ENCODE measurements at regions of chr9 and their contacts with region 1.

Region 1: DNA sequence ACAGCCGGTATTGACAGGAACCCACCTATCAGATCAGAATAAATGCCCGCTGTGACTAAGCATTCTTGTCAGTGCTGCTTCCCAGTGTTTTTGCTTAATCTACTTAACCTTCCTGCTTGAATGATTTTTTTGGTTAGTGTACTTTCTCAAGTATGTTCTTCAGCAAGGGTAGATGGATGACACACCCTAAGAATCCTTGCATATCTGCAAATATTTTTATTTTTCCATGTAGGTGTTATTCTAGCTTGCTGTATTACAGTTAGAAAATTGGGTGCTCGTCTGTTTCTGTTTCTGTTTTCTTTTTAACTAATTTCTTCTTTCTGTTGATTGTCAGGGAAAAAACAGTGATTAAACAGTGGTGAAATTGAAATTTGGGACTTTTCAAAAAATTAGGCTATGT is 64.5 kb downstream of the SEC61B start:
- DNase-seq: no peak
- ATAC-seq: no peak
- H3K4me3 ChIP-seq: no peak overlapping the region
- H3K27ac ChIP-seq: no peak overlapping the region
- H3K4me1 ChIP-seq: no peaks in the 10 kb centered on the region
- H3K27me3 ChIP-seq: no peaks in the 10 kb centered on the region
- CTCF ChIP-seq: no peak
- EP300 ChIP-seq: no peak
- POLR2A ChIP-seq: no peak
- RAD21 ChIP-seq: no peak

Region 2: DNA sequence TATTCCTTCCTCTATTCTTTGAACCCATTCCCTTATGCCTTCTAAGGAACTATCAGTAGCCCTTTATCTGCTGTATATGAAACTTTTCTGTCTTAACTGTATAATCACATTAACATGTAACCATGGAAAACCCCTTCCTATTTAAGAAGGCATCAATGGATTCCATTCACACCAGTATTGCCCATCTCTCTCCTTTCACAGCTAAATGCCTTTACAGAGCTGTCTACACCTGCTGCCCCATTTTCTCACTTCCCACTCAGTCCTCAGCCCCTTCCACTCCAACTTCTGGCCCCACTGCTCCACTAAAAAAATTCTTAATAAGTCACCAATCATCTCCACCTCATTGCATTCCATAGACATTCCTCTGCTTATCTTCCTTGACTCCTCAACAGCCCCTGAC is 13.7 kb before region 1 on chr9:
- CTCF ChIA-PET with region 1: interaction called, 4 read pairs
- POLR2A ChIA-PET with region 1: no interaction called
- RAD21 ChIA-PET with region 1: interaction called, 5 read pairs
- SMC1A ChIA-PET with region 1: interaction called, 10 read pairs
- in situ Hi-C with region 1: no loop called
- intact Hi-C with region 1: no loop called
- DNase-seq: no peak
- ATAC-seq: peak; percentile 69
- H3K4me3 ChIP-seq: no peak overlapping the region
- H3K27ac ChIP-seq: no peak overlapping the region
- H3K4me1 ChIP-seq: peaks cover 14% of the 10 kb centered on the region
- H3K27me3 ChIP-seq: no peaks in the 10 kb centered on the region
- CTCF ChIP-seq: no peak
- EP300 ChIP-seq: peak in 1 of 2 experiments; percentile 45; a peak in 1 of 4 replicates
- POLR2A ChIP-seq: no peak
- RAD21 ChIP-seq: no peak